GM18951 (cell line): ENCODE measurements at regions of chr5 and their contacts with region 1.

Region 1: DNA sequence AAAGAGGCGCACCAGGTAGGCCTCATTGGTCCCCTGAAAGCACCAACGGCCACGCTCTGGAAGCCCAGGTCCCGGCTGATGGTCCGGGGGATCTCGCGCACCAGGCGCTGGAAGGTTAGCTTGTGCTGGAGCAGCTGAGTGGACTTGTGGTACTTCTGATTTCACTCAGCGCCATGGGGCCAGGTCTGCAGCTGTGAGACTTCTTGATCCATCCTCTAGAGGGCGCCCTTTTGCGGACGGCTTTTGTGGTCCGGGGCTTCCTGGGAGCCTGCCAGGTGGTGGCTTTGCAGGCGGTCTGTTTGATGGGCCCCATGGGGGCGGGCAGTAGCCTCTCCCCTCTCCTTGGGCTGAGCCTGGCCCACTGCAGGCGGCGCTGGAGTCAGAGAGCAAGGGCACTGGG is 10.4 kb downstream of the TAF11L12 start:
- POLR2A ChIP-seq: no peak

Region 2: DNA sequence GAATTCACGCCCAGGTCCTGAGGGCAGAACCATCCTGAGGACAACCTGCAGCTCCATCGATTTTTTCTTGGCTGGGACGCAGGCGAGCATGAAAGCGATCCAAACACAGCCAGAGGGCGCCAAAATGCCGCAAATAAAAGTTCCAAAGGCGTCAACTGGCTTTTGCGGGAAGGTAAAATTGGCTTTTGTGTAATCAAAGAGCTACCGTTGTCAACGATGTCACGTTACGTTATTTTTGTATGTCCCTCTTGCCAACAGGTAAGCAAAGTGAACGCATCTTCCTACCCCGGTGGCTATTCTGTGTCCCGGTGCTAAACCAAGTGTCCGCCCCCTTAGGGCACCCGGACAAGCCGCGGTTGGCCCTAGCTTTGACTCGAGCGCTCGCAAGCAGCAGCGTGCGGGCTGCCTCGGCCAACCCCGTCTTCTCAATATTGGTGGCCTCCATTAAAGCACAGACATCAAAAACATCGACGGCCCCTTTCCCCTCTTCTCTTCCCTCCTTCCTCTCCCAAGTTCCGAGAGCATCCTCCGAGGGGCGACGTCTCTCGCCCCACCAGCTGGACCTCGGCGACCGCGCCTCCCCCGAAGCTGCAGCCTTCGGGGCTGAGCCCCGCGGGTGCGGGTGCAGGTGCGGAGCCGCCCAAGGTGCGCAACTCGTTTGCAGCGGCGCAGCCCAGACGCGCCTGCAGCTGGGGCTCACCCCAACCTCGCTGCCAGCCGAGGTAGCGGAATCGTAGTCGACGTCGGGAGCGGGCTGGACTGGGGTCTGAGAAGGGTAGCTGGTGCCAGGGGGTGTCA is 404.3 kb before region 1 on chr5:
- in situ Hi-C with region 1: loop called (anchors 25 kb)
- POLR2A ChIP-seq: no peak

Region 3: GRCh38 chr5:17511775-17512325 is 108.8 kb before region 1 on chr5:
- in situ Hi-C with region 1: loop called (anchors 10 kb)
- POLR2A ChIP-seq: no peak

Region 4: GRCh38 chr5:17679597-17680187 is 59.1 kb after region 1 on chr5:
- in situ Hi-C with region 1: no loop called
- POLR2A ChIP-seq: no peak